ENCODE measurements at regions of chr9 and their contacts with region 1.

Region 1: DNA sequence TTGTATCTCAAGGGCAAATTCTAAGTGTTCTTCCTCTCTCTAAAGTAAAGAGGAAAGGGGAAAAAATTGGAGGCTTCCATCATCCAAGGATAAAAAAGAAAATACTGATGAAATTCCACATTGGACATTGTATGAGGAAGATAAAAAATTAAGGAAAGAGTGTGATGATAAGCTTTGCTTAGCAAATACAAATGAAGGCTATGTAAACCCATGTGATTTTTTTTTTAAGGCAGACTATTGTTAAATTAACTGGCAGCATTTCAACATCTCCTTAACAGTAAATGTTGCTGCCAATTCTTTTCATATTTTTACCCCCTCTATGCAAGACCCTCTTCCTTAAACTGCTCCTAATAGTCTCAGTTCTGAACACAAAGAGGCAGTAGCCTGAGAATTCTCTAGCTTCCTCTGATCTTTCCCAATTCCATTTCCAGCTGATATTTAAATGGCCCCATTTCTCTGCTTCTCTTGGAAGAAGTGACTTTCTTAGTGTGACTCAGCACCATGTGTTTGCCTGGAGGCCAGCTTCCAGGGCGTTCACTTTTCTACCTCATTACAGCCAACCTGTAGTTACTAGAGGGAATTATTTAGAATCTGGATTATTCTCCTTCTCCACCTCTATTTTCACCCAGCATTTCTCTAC is 159.7 kb downstream of the TLE1 start:
- DNase-seq: no peak
- H3K4me3 ChIP-seq: no peak overlapping the region
- H3K27ac ChIP-seq: no peak overlapping the region
- H3K4me1 ChIP-seq: peaks cover 0 to 18% (median 13%) of the 10 kb centered on the region in 3 donors
- H3K27me3 ChIP-seq: peaks cover 0 to 40% (median 0%) of the 10 kb centered on the region in 4 donors
- CTCF ChIP-seq: no peak
- POLR2A ChIP-seq: no peak

Region 2: DNA sequence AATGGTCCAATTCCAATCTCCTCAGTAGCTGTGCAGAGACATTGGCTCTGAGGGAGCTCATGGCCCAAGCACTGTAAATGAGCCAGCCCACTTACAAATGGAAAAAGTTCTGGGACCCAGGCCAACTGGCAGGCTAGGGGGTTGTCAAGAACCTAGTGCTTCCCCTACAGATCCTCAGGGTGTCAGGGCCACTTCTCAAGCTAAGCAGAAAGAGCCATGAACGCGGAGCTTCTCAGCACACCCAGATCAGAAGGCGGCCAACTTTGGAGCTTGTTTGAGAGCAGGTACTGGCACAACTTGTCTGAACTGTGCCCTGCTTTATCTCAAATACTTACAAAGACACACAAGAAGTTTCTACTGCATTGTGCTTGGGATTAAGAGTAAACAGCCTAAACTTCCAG is 142.2 kb after region 1 on chr9:
- intact Hi-C with region 1: loop called (anchors 10 kb)
- DNase-seq: no peak
- H3K4me3 ChIP-seq: no peak overlapping the region
- H3K27ac ChIP-seq: peak overlapping the region in 2 of 4 donors; percentile 56 to 59
- H3K4me1 ChIP-seq: peaks cover 5 to 57% (median 20%) of the 10 kb centered on the region in 3 donors
- H3K27me3 ChIP-seq: no peaks in the 10 kb centered on the region
- CTCF ChIP-seq: no peak
- POLR2A ChIP-seq: no peak

Region 3: GRCh38 chr9:81689343-81690190 is 159.9 kb after region 1 on chr9 and contains the start of gene TLE1:
- intact Hi-C with region 1: loop called (anchors 10 kb)
- DNase-seq: peak; percentile 86
- H3K4me3 ChIP-seq: peak within 1 kb of the TSS; percentile 79 to 91 (median 84)
- H3K27ac ChIP-seq: peak within 1 kb of the TSS; percentile 92 to 96 (median 94)
- H3K4me1 ChIP-seq: peaks cover 8 to 42% (median 12%) of the 10 kb centered on the region in 3 donors
- H3K27me3 ChIP-seq: peaks cover 0 to 16% (median 0%) of the 10 kb centered on the region in 4 donors
- CTCF ChIP-seq: no peak
- POLR2A ChIP-seq: peak in 3 of 4 donors; percentile 52 to 96 (median 93)
- total RNA-seq, gene TLE1: 17.1 to 43.3 (median 20.4) TPM